Right lobe of liver (tissue), 6 donors: ENCODE measurements at regions of chr1 and their contacts with region 1.

Region 1: DNA sequence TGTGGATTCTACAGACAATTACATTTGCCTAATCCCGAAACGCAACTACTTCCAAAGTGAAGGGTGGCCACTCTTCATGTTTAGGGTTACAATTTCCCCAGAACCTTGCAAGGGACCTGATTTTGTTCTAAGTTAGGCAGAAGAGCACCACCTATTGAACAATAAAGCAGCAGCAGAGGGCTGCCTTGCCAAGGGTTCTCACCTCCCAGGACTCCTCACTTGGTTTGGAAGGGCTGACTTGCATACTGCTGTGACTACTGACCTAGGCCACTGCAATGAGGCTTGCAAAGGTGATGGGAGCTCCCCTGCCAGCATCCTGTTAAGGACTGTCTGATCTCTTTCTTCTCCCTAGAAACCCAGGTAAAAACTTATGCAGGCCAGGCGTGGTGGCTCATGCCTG is 14.2 kb downstream of the MTOR start:
- DNase-seq: no peak
- ATAC-seq: peak in 2 of 4 donors; percentile 22 to 41
- H3K4me3 ChIP-seq: no peak overlapping the region
- H3K27ac ChIP-seq: no peak overlapping the region
- H3K4me1 ChIP-seq: peaks cover 0 to 10% (median 0%) of the 10 kb centered on the region in 4 donors
- H3K27me3 ChIP-seq: no peaks in the 10 kb centered on the region
- CTCF ChIP-seq: peak in 1 of 4 donors; percentile 12
- POLR2A ChIP-seq: no peak

Region 2: GRCh38 chr1:11320153-11320936 is 72.2 kb after region 1 on chr1:
- intact Hi-C with region 1: no loop called
- DNase-seq: no peak
- ATAC-seq: peak; percentile 24 to 57 (median 34)
- H3K4me3 ChIP-seq: no peak overlapping the region
- H3K27ac ChIP-seq: no peak overlapping the region
- H3K4me1 ChIP-seq: no peaks in the 10 kb centered on the region
- H3K27me3 ChIP-seq: no peaks in the 10 kb centered on the region
- CTCF ChIP-seq: peak; percentile 30 to 53 (median 46)
- POLR2A ChIP-seq: no peak

Region 3: GRCh38 chr1:11341901-11342552 is 93.9 kb after region 1 on chr1:
- intact Hi-C with region 1: no loop called
- DNase-seq: no peak
- ATAC-seq: no peak
- H3K4me3 ChIP-seq: no peak overlapping the region
- H3K27ac ChIP-seq: no peak overlapping the region
- H3K4me1 ChIP-seq: no peaks in the 10 kb centered on the region
- H3K27me3 ChIP-seq: no peaks in the 10 kb centered on the region
- CTCF ChIP-seq: no peak
- POLR2A ChIP-seq: no peak

Region 4: GRCh38 chr1:11352816-11353799 is 105.0 kb after region 1 on chr1:
- intact Hi-C with region 1: no loop called
- DNase-seq: no peak
- ATAC-seq: no peak
- H3K4me3 ChIP-seq: no peak overlapping the region
- H3K27ac ChIP-seq: no peak overlapping the region
- H3K4me1 ChIP-seq: no peaks in the 10 kb centered on the region
- H3K27me3 ChIP-seq: peaks cover 0 to 4% of the 10 kb centered on the region in 2 donors
- CTCF ChIP-seq: no peak
- POLR2A ChIP-seq: no peak

Region 5: GRCh38 chr1:11364170-11364569 is 116.0 kb after region 1 on chr1:
- intact Hi-C with region 1: loop called in 1 of 2 experiments (anchors 10 kb)
- DNase-seq: peak in 2 of 3 donors; percentile 31 to 56
- ATAC-seq: peak; percentile 83 to 89 (median 86)
- H3K4me3 ChIP-seq: no peak overlapping the region
- H3K27ac ChIP-seq: no peak overlapping the region
- H3K4me1 ChIP-seq: no peaks in the 10 kb centered on the region
- H3K27me3 ChIP-seq: no peaks in the 10 kb centered on the region
- CTCF ChIP-seq: peak; percentile 47 to 66 (median 54)
- POLR2A ChIP-seq: no peak

Region 6: DNA sequence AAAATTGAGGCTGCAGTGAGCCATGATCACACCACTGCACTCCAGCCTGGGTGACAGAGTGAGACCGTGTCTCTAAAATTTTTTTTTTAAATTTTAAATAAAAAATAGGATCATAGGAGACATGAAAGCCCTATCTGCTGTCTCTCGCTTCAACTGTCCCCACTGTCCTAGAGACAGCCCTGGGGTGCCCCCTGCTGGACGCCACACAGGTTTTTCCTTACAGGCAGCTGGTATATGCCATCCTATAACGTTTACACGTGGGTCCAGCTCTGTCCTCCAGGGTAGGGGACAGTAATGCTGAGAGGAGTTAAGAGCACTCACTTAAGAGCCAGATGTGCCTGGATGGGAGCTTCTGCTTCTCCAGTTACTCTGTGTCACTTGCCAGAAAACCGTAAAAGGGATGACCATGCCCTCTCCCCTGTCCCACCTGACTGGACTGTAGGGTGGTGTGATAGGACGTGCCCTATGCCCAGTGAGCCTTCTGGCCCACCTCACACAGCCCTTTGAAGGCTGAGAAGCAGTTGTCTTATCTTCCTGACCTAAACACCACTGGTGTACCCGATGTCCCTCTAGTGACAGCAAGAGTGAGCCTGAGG is 397.6 kb after region 1 on chr1:
- intact Hi-C with region 1: loop called in 1 of 2 experiments (anchors 10 kb)
- DNase-seq: peak; percentile 78 to 85 (median 82)
- ATAC-seq: peak in 1 of 4 donors; percentile 14
- H3K4me3 ChIP-seq: no peak overlapping the region
- H3K27ac ChIP-seq: no peak overlapping the region
- H3K4me1 ChIP-seq: peaks cover 0 to 17% (median 5%) of the 10 kb centered on the region in 4 donors
- H3K27me3 ChIP-seq: no peaks in the 10 kb centered on the region
- CTCF ChIP-seq: peak; percentile 53 to 83 (median 80)
- POLR2A ChIP-seq: no peak